HepG2 (cell line): ENCODE measurements at regions of chr17 and their contacts with region 1.

Region 1: GRCh38 chr17:62075308-62075815 is 10.3 kb upstream of the MED13 start:
- DNase-seq: no peak
- ATAC-seq: no peak; the same call in 1 of the 3 replicates
- H3K4me3 ChIP-seq: no peak overlapping the region
- H3K27ac ChIP-seq: no peak overlapping the region
- H3K4me1 ChIP-seq: peaks cover 41% of the 10 kb centered on the region
- H3K27me3 ChIP-seq: no peaks in the 10 kb centered on the region
- CTCF ChIP-seq: no peak
- EP300 ChIP-seq: no peak
- POLR2A ChIP-seq: no peak
- RAD21 ChIP-seq: no peak

Region 2: GRCh38 chr17:62085511-62086408 is 10.4 kb after region 1 on chr17:
- CTCF ChIA-PET with region 1: no interaction called
- POLR2A ChIA-PET with region 1: interaction called, 32 read pairs
- in situ Hi-C with region 1: no loop called
- intact Hi-C with region 1: no loop called
- DNase-seq: peak; percentile 79
- ATAC-seq: peak; percentile 78
- H3K4me3 ChIP-seq: no peak overlapping the region; a peak in 1 of 6 replicates
- H3K27ac ChIP-seq: peak overlapping the region; percentile 48
- H3K4me1 ChIP-seq: peaks cover 63% of the 10 kb centered on the region
- H3K27me3 ChIP-seq: no peaks in the 10 kb centered on the region
- CTCF ChIP-seq: peak; percentile 7; the same call in 1 of the 2 replicates
- EP300 ChIP-seq: peak in 1 of 2 experiments; percentile 68; a peak in 2 of 4 replicates
- POLR2A ChIP-seq: no peak
- RAD21 ChIP-seq: peak; percentile 27; the same call in 1 of the 2 replicates

Region 3: GRCh38 chr17:62092784-62093183 is 17.4 kb after region 1 on chr17:
- CTCF ChIA-PET with region 1: no interaction called
- POLR2A ChIA-PET with region 1: interaction called, 32 read pairs
- in situ Hi-C with region 1: no loop called
- intact Hi-C with region 1: no loop called
- DNase-seq: no peak
- ATAC-seq: no peak
- H3K4me3 ChIP-seq: no peak overlapping the region
- H3K27ac ChIP-seq: no peak overlapping the region
- H3K4me1 ChIP-seq: peaks cover 66% of the 10 kb centered on the region
- H3K27me3 ChIP-seq: no peaks in the 10 kb centered on the region
- CTCF ChIP-seq: no peak
- EP300 ChIP-seq: no peak
- POLR2A ChIP-seq: no peak
- RAD21 ChIP-seq: no peak

Region 4: DNA sequence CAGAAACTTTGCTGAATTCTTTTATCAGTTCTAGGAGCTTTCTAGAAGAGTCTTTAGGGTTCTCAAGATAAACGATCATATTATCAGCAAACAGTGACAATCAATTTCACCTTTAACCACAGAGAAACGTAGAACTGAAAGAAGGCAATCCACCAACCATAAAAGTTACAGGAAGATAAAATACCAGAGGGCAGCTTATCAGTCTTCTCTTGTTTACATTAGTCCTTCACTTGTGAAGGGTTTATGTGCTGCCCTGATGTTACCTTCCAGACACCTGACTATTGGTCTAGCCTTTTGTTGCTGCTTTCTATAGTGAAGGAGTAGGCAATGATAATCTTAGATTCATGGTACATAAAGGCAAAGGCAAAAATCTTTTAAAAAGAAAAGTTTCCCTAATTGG is 231.8 kb after region 1 on chr17:
- CTCF ChIA-PET with region 1: no interaction called
- POLR2A ChIA-PET with region 1: no interaction called
- in situ Hi-C with region 1: no loop called
- intact Hi-C with region 1: no loop called
- DNase-seq: no peak
- ATAC-seq: no peak
- H3K4me3 ChIP-seq: no peak overlapping the region
- H3K27ac ChIP-seq: no peak overlapping the region
- H3K4me1 ChIP-seq: no peaks in the 10 kb centered on the region
- H3K27me3 ChIP-seq: no peaks in the 10 kb centered on the region; a peak in 1 of 5 replicates
- CTCF ChIP-seq: no peak
- EP300 ChIP-seq: no peak
- POLR2A ChIP-seq: no peak
- RAD21 ChIP-seq: no peak